Ascending aorta (tissue), 2 donors: ENCODE measurements at regions of chr10 and their contacts with region 1.

Region 1: DNA sequence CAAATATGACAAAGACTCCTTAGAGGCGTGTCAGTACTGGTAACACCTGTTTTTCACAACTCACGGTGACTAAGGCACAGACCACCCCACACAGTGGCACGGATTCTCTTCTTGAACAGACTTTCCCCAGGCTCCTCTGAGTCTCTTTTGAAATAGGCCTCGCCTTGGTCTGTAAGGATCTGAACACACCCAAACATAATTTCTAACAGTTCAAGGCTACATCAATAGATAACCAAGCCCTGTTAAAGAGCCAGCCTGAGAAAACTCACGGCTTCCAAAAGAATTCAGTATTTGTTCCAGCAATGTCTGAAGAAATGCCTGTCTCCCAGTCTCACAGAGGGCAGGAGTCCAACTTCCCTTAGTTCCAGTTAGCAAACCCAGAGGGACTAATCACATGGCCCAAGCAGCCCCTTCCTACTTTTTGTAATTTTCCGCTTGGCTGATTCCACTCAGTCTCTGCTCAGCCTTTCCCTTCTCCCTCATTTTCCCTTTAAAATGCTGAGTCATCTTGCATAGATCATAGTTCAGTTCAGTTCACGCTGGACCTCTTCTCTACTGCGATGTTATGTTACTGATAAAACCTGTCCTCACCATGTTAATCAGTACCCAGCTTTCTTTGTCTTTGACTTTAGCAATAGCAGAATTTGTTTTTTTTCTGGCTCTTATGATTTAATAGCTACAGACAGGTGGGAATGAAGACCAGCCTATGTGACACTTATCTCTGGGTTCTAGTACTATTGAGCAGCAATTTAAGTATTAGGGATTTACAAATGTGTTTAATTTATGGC is 22.6 kb upstream of the AKR1C3 start:
- DNase-seq: peak; percentile 28 to 93
- H3K4me3 ChIP-seq: peak overlapping the region in 1 of 2 donors; percentile 24
- H3K27ac ChIP-seq: peak overlapping the region; percentile 90 to 93
- H3K4me1 ChIP-seq: peaks cover 8 to 23% of the 10 kb centered on the region in 2 donors
- H3K27me3 ChIP-seq: no peaks in the 10 kb centered on the region
- CTCF ChIP-seq: no peak

Region 2: GRCh38 chr10:3107426-3107961 is 1964.1 kb before region 1 on chr10:
- intact Hi-C with region 1: loop called (anchors 5 kb)
- DNase-seq: peak; percentile 84 to 98
- H3K4me3 ChIP-seq: peak overlapping the region in 1 of 2 donors; percentile 26
- H3K27ac ChIP-seq: peak overlapping the region; percentile 88 to 95
- H3K4me1 ChIP-seq: peaks cover 12 to 38% of the 10 kb centered on the region in 2 donors
- H3K27me3 ChIP-seq: no peaks in the 10 kb centered on the region
- CTCF ChIP-seq: no peak

Region 3: DNA sequence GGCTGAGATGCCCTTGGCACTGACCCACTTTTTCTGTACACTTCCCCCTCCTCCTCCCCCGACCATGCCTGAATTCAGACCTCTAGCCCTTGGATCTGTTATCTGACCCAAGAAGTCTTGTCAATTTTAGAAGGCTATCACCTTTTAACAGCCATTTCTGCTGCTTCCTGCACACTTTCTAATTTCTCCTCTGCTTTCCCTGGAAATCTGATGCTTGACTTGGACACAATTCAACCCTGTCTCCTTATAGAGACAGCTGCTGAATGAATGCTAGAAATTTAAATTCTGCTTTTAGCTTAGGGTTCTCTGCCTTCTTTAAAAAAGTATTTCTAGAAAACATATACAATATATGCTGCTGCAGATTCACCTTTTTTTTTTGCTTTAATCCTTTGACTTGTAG is 868.7 kb before region 1 on chr10:
- intact Hi-C with region 1: no loop called
- DNase-seq: no peak
- H3K4me3 ChIP-seq: no peak overlapping the region
- H3K27ac ChIP-seq: peak overlapping the region in 1 of 2 donors; percentile 7
- H3K4me1 ChIP-seq: peaks cover 0 to 10% of the 10 kb centered on the region in 2 donors
- H3K27me3 ChIP-seq: no peaks in the 10 kb centered on the region
- CTCF ChIP-seq: no peak

Region 4: GRCh38 chr10:4947635-4948596 is 123.7 kb before region 1 on chr10:
- intact Hi-C with region 1: loop called (anchors 5 kb)
- DNase-seq: peak in 1 of 2 donors; percentile 87
- H3K4me3 ChIP-seq: no peak overlapping the region
- H3K27ac ChIP-seq: peak overlapping the region; percentile 80 to 94
- H3K4me1 ChIP-seq: peaks cover 15 to 41% of the 10 kb centered on the region in 2 donors
- H3K27me3 ChIP-seq: no peaks in the 10 kb centered on the region
- CTCF ChIP-seq: no peak

Region 5: GRCh38 chr10:5040784-5041470 is 30.7 kb before region 1 on chr10:
- intact Hi-C with region 1: loop called (anchors 2 kb)
- DNase-seq: no peak
- H3K4me3 ChIP-seq: peak overlapping the region; percentile 31 to 56
- H3K27ac ChIP-seq: peak overlapping the region; percentile 32 to 64
- H3K4me1 ChIP-seq: peaks cover 0 to 3% of the 10 kb centered on the region in 2 donors
- H3K27me3 ChIP-seq: no peaks in the 10 kb centered on the region
- CTCF ChIP-seq: no peak

Region 6: DNA sequence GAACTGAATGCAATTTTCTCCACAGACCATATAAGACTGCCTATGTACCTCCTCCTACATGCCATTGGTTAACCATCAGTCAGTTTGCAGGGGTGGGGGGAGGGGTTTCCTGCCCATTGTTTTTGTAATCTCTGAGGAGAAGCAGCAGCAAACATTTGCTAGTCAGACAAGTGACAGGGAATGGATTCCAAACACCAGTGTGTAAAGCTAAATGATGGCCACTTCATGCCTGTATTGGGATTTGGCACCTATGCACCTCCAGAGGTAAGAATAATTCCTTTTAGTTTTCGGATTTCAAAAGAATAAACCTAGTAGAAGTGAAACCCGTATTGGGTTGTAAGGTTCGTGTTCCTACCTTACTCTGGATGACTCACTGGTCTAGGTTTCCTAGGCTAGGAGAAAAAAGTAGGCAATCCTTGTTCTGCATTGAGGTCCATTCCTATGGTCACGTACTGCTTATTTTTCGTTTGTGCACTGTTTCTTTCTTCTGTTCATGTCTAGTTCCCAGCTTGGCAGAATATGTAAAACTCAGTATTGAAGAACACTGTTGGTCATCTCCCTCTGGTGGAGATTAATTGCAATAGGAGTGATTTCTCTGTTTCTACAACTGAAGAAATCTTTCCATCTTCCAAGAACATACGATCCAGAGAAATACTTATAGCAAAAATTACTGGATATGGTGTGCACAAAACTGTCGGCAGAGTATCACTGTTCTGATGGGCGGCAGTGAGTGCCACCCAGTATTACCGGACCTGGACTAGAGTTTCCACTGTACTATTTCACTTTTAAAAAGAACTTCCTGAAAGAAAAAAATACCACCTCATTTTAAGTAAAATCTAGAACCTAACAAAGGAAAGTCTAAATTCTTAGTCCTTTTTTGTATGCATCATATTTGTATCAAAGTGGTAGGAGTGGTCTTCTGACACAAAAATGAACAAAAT is 22.9 kb after region 1 on chr10 and contains the start of gene AKR1C3:
- intact Hi-C with region 1: loop called (anchors 1 kb)
- DNase-seq: no peak
- H3K4me3 ChIP-seq: peak within 1 kb of the TSS; percentile 56 to 66
- H3K27ac ChIP-seq: peak within 1 kb of the TSS; percentile 63 to 65
- H3K4me1 ChIP-seq: peaks cover 0 to 8% of the 10 kb centered on the region in 2 donors
- H3K27me3 ChIP-seq: no peaks in the 10 kb centered on the region
- CTCF ChIP-seq: peak; percentile 71 to 84 (median 74)
- total RNA-seq, gene AKR1C3: 64.4 TPM